HCT116 (cell line): ENCODE measurements at regions of chr9 and their contacts with region 1.

Region 1: DNA sequence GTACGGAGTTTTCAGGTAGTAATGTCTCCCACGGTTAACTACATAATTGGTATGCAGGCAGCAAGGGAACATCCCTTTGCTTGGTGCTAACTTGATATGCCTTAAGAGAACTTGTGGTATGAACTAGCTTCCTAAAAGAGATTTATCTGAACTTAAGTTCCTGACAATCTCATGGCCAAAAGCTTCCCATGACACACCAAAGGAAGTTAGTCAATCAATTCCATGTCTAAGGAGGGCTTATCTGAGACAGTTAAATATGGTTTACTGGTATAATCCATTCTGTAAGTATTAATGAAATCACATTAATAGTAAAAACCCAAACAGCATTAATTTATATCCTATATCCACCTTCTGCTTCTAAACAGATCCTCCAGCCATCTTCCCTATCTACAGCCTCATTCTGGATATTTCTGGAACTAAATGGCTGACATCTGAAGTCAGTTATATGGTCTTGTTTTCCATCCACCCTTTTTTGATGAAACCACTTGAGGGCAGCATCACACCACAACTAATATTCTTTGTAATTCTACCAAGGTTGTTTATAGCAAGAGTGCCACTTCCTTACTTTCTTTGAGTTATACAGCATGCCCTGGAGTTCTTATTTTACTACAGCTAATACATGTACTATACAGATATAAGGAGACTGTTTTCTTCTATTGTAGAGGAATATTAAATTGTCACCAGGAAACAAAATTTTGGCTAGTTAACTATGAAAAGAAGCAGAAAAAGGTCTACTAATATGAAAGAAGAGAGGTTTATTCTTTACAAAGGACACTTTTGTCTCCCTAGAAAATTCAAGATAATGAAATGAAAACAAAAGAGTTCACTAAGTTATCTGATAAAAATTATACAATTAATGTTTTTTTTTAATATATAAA is 34.7 kb downstream of the SHOC1 start:
- DNase-seq: peak; percentile 76
- ATAC-seq: peak; percentile 95
- H3K4me3 ChIP-seq: no peak overlapping the region
- H3K27ac ChIP-seq: no peak overlapping the region
- H3K4me1 ChIP-seq: peaks cover 0 to 4% of the 10 kb centered on the region in 2 experiments; a peak in 1 of 4 replicates
- H3K27me3 ChIP-seq: no peaks in the 10 kb centered on the region
- CTCF ChIP-seq: peak; percentile 53 to 89 (median 74); a peak in 5 of 6 replicates
- POLR2A ChIP-seq: no peak
- RAD21 ChIP-seq: peak; percentile 95

Region 2: DNA sequence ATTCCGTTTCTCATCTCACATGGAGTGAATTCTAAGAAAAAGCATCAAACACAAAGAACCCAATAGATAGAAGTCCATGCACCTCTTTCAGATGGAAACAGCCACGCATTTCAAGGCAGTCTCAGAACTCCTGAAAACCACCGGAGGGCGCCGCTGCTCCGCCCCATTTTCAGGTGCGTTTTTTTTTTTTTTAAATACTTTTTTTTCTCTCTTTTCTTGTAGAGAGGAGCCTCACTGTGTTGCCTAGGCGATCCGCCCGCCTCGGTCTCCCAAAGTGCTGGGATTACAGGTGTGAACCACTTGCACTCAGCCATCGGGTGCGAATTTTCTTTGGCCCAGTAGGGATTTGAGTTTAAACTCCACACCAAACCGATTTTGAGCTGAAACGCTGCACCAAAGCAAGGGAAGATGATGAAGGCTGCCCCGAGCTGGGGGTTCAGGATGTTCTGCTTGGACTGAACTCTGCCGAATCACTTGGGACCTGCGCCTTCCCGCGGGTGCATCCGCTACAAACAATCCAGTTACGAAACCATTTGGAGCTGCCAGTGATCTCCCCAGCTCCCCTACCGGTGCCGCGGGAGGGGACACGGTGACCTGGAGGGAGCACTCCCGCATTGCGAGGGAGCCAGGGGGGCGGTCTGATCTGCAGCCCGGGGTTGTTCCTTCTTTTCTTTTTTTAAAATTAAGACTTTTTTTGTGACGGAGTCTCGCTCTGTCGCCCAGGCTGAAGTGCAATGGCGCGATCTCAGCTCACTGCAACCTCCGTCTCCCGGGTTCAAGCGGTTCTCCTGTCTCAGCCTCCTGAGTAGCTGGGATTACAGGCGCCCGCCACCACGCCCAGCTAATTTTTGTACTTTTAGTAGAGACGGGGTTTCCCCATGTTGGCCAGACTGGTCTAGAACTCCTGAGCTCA is 161.9 kb before region 1 on chr9:
- CTCF ChIA-PET with region 1: no interaction called
- POLR2A ChIA-PET with region 1: no interaction called
- RAD21 ChIA-PET with region 1: no interaction called
- intact Hi-C with region 1: loop called (anchors 10 kb)
- DNase-seq: peak; percentile 63
- ATAC-seq: peak; percentile 54
- H3K4me3 ChIP-seq: peak overlapping the region; percentile 69 to 85
- H3K27ac ChIP-seq: peak overlapping the region; percentile 65
- H3K4me1 ChIP-seq: peaks cover 7 to 12% of the 10 kb centered on the region in 2 experiments; a peak in 3 of 4 replicates
- H3K27me3 ChIP-seq: no peaks in the 10 kb centered on the region
- CTCF ChIP-seq: peak; percentile 68 to 78 (median 69); a peak in 5 of 6 replicates
- POLR2A ChIP-seq: no peak
- RAD21 ChIP-seq: peak; percentile 87

Region 3: DNA sequence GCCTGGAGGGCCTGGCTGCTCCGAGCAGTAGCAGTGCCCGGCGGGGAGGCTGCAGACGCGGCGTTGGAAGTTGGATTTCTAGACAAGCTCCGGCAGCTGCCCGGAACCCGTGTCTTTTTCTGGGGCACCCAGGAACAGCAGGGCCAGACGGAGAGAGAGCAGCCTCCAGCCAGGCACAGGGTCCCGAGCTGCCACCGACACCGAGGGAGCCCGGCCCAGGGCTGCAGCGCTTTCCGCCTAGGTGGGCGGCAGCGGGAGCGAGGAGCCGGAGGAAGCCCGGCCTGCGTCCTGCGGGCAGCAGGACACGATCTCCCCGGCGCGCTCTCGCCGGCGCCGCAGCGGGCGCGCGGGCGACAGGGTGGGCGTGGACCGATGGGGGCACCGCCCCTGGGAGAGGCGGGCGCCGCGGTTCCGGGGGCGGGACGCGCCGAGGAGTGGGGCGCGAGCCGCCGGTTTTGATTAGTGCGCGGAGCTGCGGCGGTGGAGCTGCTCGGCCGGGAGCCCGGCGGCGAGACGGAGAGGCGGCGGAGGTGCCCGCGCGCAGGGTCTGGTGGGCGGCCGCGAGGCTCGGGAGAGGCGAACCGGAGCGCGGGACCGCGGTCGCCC is 136.5 kb after region 1 on chr9 and contains the start of gene UGCG:
- CTCF ChIA-PET with region 1: no interaction called
- POLR2A ChIA-PET with region 1: interaction called, 3 read pairs
- RAD21 ChIA-PET with region 1: interaction called in 1 of 2 experiments, 4 read pairs
- intact Hi-C with region 1: loop called (anchors 5 kb)
- DNase-seq: peak; percentile 72
- ATAC-seq: peak; percentile 83
- H3K4me3 ChIP-seq: peak within 1 kb of the TSS; percentile 77 to 81
- H3K27ac ChIP-seq: peak within 1 kb of the TSS; percentile 92
- H3K4me1 ChIP-seq: peaks cover 29 to 86% of the 10 kb centered on the region in 2 experiments
- H3K27me3 ChIP-seq: no peaks in the 10 kb centered on the region
- CTCF ChIP-seq: no peak
- POLR2A ChIP-seq: peak; percentile 98
- RAD21 ChIP-seq: no peak
- total RNA-seq, gene UGCG: 32.6 TPM

Region 4: GRCh38 chr9:111975709-111976108 is 215.7 kb after region 1 on chr9:
- CTCF ChIA-PET with region 1: no interaction called
- POLR2A ChIA-PET with region 1: no interaction called
- RAD21 ChIA-PET with region 1: no interaction called
- intact Hi-C with region 1: loop called (anchors 5 kb)
- DNase-seq: peak; percentile 32
- ATAC-seq: peak; percentile 85
- H3K4me3 ChIP-seq: no peak overlapping the region
- H3K27ac ChIP-seq: no peak overlapping the region
- H3K4me1 ChIP-seq: peaks cover 0 to 24% of the 10 kb centered on the region in 2 experiments; a peak in 1 of 4 replicates
- H3K27me3 ChIP-seq: no peaks in the 10 kb centered on the region
- CTCF ChIP-seq: peak; percentile 9 to 31 (median 23); a peak in 4 of 6 replicates
- POLR2A ChIP-seq: no peak
- RAD21 ChIP-seq: peak; percentile 76

Region 5: DNA sequence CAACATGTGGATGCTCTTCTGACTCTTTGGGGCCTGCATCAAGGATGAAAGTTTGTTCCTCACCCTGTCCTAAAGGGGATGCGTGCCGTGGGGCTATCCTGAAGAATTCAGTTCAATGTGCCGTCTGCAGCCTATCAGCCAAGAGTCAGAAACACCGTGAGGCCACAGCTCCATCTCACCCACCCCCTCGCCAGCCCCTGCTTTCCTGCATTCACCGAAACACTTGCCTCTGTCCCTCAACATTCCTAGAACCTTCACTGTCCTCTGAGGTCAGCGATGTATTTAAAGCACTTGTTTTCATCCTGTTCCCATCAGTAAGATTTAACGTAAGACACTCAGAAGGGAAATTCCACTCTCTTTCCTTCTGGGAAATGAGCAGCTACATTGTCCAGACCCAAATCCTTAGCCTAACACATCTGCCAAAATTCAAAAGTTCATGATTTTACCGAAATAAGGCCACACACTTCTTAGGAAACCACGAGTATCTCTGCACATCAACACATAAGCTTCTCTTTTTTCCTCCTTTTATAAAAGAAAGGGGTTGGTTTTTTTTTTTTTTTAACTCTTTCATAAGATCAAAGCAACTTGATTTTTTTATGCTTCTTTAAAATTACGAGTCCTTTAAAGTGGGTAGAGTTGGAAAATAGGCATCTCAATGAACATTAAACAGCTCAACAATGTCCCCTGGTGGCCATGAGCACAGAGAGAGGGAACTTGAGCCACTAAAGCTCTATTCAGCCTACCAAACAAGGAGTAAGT is 314.4 kb after region 1 on chr9:
- CTCF ChIA-PET with region 1: interaction called, 54 read pairs
- POLR2A ChIA-PET with region 1: no interaction called
- RAD21 ChIA-PET with region 1: interaction called, 4 to 8 read pairs
- intact Hi-C with region 1: loop called (anchors 1 kb)
- DNase-seq: peak; percentile 54
- ATAC-seq: peak; percentile 83
- H3K4me3 ChIP-seq: no peak overlapping the region
- H3K27ac ChIP-seq: no peak overlapping the region
- H3K4me1 ChIP-seq: peaks cover 16 to 51% of the 10 kb centered on the region in 2 experiments
- H3K27me3 ChIP-seq: no peaks in the 10 kb centered on the region
- CTCF ChIP-seq: peak; percentile 89 to 97 (median 90)
- POLR2A ChIP-seq: no peak
- RAD21 ChIP-seq: peak; percentile 97

Region 6: GRCh38 chr9:112333639-112334431 is 573.8 kb after region 1 on chr9:
- CTCF ChIA-PET with region 1: no interaction called
- POLR2A ChIA-PET with region 1: no interaction called
- RAD21 ChIA-PET with region 1: no interaction called
- intact Hi-C with region 1: loop called (anchors 10 kb)
- DNase-seq: peak; percentile 87
- ATAC-seq: peak; percentile 85
- H3K4me3 ChIP-seq: peak overlapping the region; percentile 60 to 72
- H3K27ac ChIP-seq: peak overlapping the region; percentile 100
- H3K4me1 ChIP-seq: peaks cover 23 to 43% of the 10 kb centered on the region in 2 experiments
- H3K27me3 ChIP-seq: no peaks in the 10 kb centered on the region
- CTCF ChIP-seq: peak; percentile 34 to 49 (median 43); a peak in 5 of 6 replicates
- POLR2A ChIP-seq: no peak
- RAD21 ChIP-seq: peak; percentile 55

Region 7: DNA sequence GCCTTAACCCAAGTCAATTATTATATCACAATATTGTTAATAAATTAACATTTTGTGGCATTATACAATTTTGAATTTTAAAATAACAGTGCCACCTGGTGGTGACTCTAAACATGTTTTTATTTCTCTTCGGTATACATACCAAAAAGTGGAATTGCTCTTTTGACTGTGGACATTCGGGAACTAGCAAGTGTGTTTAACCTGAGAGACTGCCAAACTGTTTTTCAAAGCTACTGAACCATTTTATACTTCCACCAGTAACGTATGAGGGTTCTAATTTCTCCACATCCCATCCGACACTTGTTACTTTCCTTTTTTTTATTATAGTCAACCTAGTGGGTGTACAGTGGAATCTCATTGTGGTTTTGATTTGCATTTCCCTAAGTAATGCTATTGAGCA is 601.6 kb after region 1 on chr9:
- CTCF ChIA-PET with region 1: no interaction called
- POLR2A ChIA-PET with region 1: no interaction called
- RAD21 ChIA-PET with region 1: no interaction called
- intact Hi-C with region 1: loop called (anchors 10 kb)
- DNase-seq: peak; percentile 33
- ATAC-seq: 0 out of 2 replicates have a peak, but pooled peaks have one; percentile 50
- H3K4me3 ChIP-seq: no peak overlapping the region
- H3K27ac ChIP-seq: no peak overlapping the region
- H3K4me1 ChIP-seq: peaks cover 7 to 10% of the 10 kb centered on the region in 2 experiments; a peak in 3 of 4 replicates
- H3K27me3 ChIP-seq: no peaks in the 10 kb centered on the region
- CTCF ChIP-seq: peak in 2 of 3 experiments; percentile 58 to 86; a peak in 4 of 6 replicates
- POLR2A ChIP-seq: no peak
- RAD21 ChIP-seq: peak; percentile 86